Activated T-helper 1 cell treated with anti-CD3 and anti-CD28 coated beads, Interleukin-12 subunit alpha, Interleukin-12 subunit beta, Interleukin-2, Interleukin-4 antibody, amounts not matched to agents 30 ng/mL and 10 ng/mL and 1 ng/mL, durations not matched to agents 14 hours and 24 hours and 36 hours (primary cell): ENCODE measurements at regions of chr7 and their contacts with region 1.

Region 1: DNA sequence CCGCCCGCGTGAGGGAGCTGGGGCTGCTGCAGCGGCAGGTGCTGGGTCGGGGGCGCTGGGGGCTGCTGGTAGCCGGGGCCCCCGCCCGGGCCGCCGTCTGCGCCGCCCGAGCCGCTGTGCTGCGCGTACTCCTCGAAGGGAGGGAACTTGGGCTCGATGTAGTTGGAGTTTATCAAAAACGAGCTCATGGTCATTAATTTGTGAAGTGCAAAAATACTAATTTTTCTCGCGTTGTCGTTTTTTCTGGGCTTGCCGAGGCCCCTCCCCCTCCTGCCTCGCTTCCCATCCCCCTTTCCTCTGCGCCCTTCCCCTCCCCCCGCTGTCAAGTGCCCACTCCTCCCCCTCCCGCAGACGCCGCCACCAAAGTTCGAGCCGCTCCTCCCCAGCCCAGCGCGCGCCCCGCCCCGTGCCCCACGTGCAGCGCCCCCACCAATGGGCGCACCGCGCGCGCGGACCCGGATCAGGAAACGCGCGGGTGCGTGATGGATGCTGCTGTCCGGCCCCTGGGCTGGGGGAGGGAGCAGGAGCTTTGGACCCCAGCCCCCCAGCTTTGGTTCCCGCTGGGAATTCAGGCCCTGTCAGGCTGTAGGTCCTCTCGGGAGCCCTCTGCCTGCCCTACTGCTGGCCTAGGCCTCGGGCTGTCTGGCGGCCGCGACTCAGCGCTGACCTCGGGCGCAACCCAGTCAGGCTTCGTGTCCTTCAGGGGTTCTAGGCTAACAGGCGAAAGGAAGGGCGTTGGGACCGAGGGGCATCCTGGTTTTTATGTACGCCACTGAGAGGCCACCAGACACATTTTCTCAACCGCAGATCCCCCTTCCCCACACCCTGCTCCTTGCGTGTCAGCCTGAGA is at the start of gene HOXA4:
- DNase-seq: peak; percentile 67
- H3K4me3 Mint-ChIP-seq: peak within 1 kb of the TSS; percentile 51
- H3K27ac Mint-ChIP-seq: no peak within 1 kb of the TSS
- H3K4me1 Mint-ChIP-seq: peaks cover 27% of the 10 kb centered on the region
- H3K27me3 Mint-ChIP-seq: peaks cover 51% of the 10 kb centered on the region
- total RNA-seq, gene HOXA4: not detected in 2 replicates

Region 2: GRCh38 chr7:27095897-27096767 is 34.6 kb before region 1 on chr7 and contains the start of gene HOXA1:
- intact Hi-C with region 1: loop called (anchors 2 kb)
- DNase-seq: peak; percentile 48
- H3K4me3 Mint-ChIP-seq: peak within 1 kb of the TSS; percentile 85
- H3K27ac Mint-ChIP-seq: peak within 1 kb of the TSS; percentile 73
- H3K4me1 Mint-ChIP-seq: peaks cover 18% of the 10 kb centered on the region
- H3K27me3 Mint-ChIP-seq: peaks cover 76% of the 10 kb centered on the region
- total RNA-seq, gene HOXA1: 0.16 and 0.24 TPM in 2 replicates

Region 3: DNA sequence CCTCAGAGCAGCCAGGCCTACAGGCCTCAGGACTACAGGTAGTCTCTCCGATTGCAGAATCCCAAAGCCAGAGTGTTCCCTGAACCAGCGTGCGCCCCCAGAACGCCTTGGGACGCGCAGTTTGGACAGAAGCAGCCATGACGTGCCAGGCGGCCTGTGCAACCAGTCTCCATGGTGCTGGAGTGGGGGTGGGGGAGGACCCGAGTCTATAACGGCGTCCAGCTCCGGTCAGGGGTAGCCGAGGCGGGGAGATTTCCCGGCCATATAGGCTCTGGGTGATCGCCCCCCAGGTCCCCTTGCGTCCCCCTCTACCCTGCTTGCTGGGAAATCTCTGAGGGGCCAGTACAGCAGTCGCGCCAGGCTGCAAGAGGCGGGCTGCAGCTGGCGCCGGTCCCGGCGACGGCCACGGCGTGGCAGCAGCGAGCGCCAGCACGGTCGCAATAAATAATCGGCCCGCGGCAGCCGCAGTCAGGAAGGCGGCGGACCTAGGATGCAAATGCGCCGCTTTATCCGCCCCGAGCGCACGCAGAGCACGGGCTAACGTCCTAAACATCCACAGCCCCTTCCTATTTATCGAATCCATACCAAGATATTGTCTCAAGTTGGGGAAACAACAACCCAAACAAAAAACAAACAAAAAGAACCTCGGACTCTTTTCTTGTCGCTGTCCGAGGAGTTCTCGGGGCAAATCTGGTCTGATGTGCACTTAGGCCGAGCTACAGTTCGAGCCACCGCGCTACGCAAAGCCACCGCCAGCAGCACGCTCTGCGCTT is 20.0 kb after region 1 on chr7:
- intact Hi-C with region 1: loop called (anchors 2 kb)
- DNase-seq: peak; percentile 46
- H3K4me3 Mint-ChIP-seq: peak overlapping the region; percentile 57
- H3K27ac Mint-ChIP-seq: peak overlapping the region; percentile 7
- H3K4me1 Mint-ChIP-seq: peaks cover 18% of the 10 kb centered on the region
- H3K27me3 Mint-ChIP-seq: peaks cover 88% of the 10 kb centered on the region